ENCODE measurements at regions of chr6 and their contacts with region 1.

Region 1: GRCh38 chr6:41914869-41915530 is 5.9 kb downstream of the MED20 start:
- DNase-seq: no peak
- H3K4me3 ChIP-seq: no peak overlapping the region
- H3K27ac ChIP-seq: no peak overlapping the region
- H3K4me1 ChIP-seq: peaks cover 28% of the 10 kb centered on the region
- H3K27me3 ChIP-seq: no peaks in the 10 kb centered on the region
- CTCF ChIP-seq: no peak

Region 2: GRCh38 chr6:41996997-41997396 is 82.0 kb after region 1 on chr6:
- CTCF ChIA-PET with region 1: no interaction called
- POLR2A ChIA-PET with region 1: interaction called, 12 read pairs
- intact Hi-C with region 1: no loop called
- DNase-seq: no peak
- H3K4me3 ChIP-seq: no peak overlapping the region
- H3K27ac ChIP-seq: no peak overlapping the region
- H3K4me1 ChIP-seq: no peaks in the 10 kb centered on the region
- H3K27me3 ChIP-seq: no peaks in the 10 kb centered on the region
- CTCF ChIP-seq: no peak

Region 3: GRCh38 chr6:42210551-42210950 is 295.6 kb after region 1 on chr6:
- CTCF ChIA-PET with region 1: no interaction called
- POLR2A ChIA-PET with region 1: no interaction called
- intact Hi-C with region 1: no loop called
- DNase-seq: no peak
- H3K4me3 ChIP-seq: no peak overlapping the region
- H3K27ac ChIP-seq: no peak overlapping the region
- H3K4me1 ChIP-seq: peaks cover 13% of the 10 kb centered on the region
- H3K27me3 ChIP-seq: no peaks in the 10 kb centered on the region
- CTCF ChIP-seq: no peak

Region 4: DNA sequence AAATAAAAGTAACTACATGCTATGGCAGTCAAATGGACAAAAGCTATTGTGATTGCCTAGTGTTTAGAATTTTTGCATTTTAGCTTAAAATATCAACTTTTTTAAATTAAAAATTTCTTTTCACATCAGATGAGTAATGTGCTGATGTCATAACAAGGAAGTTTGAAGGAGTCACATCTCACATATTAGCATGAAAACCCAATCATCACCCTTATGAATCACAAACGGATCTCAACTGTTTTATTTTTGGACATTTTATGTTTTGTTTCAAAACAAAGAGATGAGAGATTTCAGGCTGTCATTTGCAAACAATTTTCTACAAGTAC is 590.3 kb after region 1 on chr6:
- CTCF ChIA-PET with region 1: no interaction called
- POLR2A ChIA-PET with region 1: interaction called, 18 read pairs
- intact Hi-C with region 1: no loop called
- DNase-seq: peak in 1 of 2 experiments; percentile 56
- H3K4me3 ChIP-seq: peak overlapping the region; percentile 39; the same call in 1 of the 2 replicates
- H3K27ac ChIP-seq: peak overlapping the region; percentile 71
- H3K4me1 ChIP-seq: peaks cover 11% of the 10 kb centered on the region; the same call in 1 of the 2 replicates
- H3K27me3 ChIP-seq: no peaks in the 10 kb centered on the region
- CTCF ChIP-seq: no peak